Activated T-helper 2 cell treated with anti-CD3 and anti-CD28 coated beads, Interferon-gamma antibody, Interleukin-2, Interleukin-4, amounts not matched to agents 10 μg/mL and 5 μg/mL and 100 μg/mL, durations not matched to agents 14 hours and 24 hours and 36 hours (primary cell): ENCODE measurements at regions of chr2 and their contacts with region 1.

Region 1: DNA sequence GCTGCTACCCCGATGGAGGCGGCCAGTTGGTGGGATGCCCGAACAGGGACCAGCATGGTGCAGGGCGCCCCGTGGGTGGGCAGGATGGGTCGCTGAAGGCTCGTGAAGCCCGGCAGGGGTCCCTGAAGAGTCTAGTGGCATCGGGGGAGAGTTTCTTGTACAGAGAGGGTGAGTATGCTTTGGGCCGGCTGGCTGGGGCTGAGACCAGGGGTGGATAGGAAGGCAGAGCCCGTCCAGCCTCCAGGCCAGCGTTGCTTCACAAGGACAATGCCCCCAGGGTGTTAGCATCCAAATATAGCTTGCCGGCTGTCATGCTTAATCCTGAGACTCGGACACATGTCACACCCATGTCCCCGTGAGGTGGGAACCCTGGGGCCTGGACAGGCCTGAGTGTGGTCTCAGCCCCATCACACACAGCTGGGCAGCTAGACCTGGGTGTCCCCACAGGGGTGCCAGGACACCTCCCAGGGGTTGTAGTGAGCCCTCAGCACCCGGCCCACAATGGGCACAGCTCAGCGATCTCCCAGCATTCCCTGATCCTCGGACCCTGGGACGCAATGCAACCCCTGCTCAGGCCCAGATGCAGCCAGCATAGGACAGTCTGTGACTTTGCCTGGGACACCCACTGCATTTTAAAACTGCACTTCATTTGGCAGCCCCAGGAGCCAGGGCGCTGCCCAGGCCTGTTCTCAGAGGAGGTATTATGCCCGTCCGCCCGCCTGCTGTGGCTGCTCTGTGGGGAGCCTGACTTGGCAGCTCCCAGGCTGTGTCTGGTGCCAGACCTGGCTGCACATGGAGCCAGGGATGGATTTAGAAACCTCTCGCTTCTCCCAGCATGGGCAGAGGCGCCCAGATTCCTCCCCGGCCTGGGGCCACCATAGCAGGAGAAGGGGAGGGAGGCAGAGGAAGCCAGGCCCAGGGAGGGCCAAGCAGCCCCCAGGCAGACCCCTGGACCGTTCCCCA is 36.4 kb downstream of the RAMP1 start:
- DNase-seq: no peak
- H3K4me3 Mint-ChIP-seq: no peak overlapping the region
- H3K27ac Mint-ChIP-seq: no peak overlapping the region
- H3K4me1 Mint-ChIP-seq: peaks cover 41% of the 10 kb centered on the region
- H3K27me3 Mint-ChIP-seq: no peaks in the 10 kb centered on the region

Region 2: GRCh38 chr2:237662671-237663093 is 233.1 kb before region 1 on chr2:
- intact Hi-C with region 1: no loop called
- DNase-seq: peak; percentile 44
- H3K4me3 Mint-ChIP-seq: no peak overlapping the region
- H3K27ac Mint-ChIP-seq: no peak overlapping the region
- H3K4me1 Mint-ChIP-seq: peaks cover 6% of the 10 kb centered on the region
- H3K27me3 Mint-ChIP-seq: peaks cover 28% of the 10 kb centered on the region

Region 3: DNA sequence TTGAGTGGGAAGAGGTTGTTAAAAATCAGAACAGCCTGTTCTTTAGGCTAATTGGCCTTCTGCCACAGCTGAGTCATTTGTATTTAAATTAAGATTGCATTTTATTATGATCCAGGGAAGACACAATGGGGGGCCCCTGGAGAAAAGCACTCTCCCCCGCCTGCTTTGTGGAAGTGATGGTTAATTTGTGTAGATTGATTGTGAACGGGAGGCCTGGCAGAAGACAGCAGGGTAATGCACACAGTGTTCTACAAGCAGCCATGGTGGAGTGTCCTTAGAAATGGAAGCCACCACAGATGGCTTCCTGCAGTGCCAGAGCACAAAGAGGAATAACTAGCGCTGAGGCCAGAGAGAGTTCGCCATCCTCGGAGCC is 16.8 kb before region 1 on chr2:
- intact Hi-C with region 1: no loop called
- DNase-seq: no peak
- H3K4me3 Mint-ChIP-seq: no peak overlapping the region
- H3K27ac Mint-ChIP-seq: no peak overlapping the region
- H3K4me1 Mint-ChIP-seq: no peaks in the 10 kb centered on the region
- H3K27me3 Mint-ChIP-seq: no peaks in the 10 kb centered on the region

Region 4: GRCh38 chr2:238009563-238009962 is 113.7 kb after region 1 on chr2:
- intact Hi-C with region 1: loop called (anchors 5 kb)
- DNase-seq: no peak
- H3K4me3 Mint-ChIP-seq: peak overlapping the region; percentile 78
- H3K27ac Mint-ChIP-seq: peak overlapping the region; percentile 99
- H3K4me1 Mint-ChIP-seq: peaks cover 59% of the 10 kb centered on the region
- H3K27me3 Mint-ChIP-seq: no peaks in the 10 kb centered on the region